Cardiac septum (tissue), 1 donor: ENCODE measurements at regions of chr13 and their contacts with region 1.

Region 1: DNA sequence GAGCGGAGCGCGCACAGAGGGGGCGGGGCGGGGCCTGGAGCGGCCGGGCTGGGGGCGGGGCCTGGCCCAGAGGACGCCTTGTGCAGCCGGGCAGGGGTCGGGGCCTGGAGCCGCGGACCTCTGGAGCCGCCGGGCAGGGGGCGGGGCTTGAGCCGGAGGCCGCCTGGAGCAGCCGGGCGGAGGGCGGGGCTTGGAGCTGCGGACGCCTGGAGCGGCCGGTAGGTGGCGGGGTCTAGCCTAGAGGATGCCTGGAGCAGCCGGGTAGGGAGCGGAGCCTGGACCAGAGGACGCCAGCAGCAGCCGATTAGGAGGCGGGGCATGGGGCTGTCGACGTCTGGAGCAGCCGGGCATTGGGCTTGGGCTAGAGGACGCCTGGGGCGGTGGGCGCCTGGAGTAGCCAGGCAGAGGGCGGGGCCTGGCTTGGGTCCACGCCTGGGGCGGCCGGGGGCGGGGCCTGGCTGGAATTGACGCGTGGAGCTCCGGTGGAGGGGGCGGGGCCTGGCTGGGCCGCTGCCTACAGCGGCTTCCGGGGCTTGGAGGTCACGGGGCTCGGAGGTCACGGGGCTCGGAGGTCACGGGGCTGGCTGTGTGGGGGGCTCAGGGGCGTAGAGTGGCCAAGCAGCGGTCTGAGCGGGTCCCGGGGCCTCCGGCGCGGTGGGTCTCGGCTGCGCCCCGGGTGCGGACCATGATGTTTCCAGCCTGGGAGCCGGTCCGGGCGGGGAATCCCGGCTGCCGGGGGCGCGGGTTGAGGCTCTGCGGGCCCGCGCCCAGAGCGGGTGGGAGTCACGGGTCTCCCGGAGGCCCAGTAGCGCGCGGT is at the start of gene ANKRD10:
- DNase-seq: peak; percentile 99
- total RNA-seq, gene ANKRD10: 84.4 TPM

Region 2: GRCh38 chr13:110874508-110874960 is 40.7 kb before region 1 on chr13:
- intact Hi-C with region 1: loop called (anchors 2 kb)
- DNase-seq: peak; percentile 88

Region 3: GRCh38 chr13:111006506-111007031 is 91.3 kb after region 1 on chr13:
- intact Hi-C with region 1: loop called (anchors 2 kb)
- DNase-seq: peak; percentile 90

Region 4: DNA sequence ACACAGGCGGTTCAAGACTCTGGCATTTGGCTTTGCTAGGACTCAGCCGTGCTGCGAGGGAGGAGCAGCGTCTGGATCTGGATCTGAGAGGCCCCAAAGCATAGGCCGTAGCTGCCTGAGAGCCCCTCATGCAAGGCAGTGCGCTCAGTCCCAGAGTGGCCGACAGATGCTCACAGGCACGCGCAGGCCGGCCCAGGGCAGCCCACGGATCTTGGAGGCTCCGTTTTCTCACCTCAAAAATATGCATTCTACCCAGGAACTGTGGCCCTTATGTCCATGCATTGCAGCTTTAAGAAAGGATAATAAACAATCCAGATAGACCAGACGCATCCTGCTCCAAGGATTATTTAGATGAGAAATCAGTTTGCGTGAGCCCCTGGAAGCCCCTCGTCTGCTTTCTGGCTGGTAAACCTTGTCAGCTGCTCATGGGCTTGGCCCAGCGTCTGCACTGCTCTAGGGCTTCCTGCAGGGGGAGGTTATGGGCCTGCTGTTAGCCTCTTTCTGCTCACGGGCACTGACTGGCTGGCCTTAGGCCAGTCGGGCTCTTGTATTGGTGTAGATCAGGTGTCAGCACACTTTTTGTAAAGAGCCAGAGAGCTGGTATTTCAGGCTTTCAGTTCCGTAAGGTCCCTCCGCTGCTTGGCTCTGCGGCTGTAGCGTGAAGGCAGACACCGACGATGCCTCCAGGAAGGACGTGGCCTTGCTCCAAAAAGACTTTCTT is 429.4 kb after region 1 on chr13:
- intact Hi-C with region 1: no loop called
- DNase-seq: peak; percentile 68